Endothelial cell of umbilical vein (primary cell): ENCODE measurements at regions of chr3 and their contacts with region 1.

Region 1: DNA sequence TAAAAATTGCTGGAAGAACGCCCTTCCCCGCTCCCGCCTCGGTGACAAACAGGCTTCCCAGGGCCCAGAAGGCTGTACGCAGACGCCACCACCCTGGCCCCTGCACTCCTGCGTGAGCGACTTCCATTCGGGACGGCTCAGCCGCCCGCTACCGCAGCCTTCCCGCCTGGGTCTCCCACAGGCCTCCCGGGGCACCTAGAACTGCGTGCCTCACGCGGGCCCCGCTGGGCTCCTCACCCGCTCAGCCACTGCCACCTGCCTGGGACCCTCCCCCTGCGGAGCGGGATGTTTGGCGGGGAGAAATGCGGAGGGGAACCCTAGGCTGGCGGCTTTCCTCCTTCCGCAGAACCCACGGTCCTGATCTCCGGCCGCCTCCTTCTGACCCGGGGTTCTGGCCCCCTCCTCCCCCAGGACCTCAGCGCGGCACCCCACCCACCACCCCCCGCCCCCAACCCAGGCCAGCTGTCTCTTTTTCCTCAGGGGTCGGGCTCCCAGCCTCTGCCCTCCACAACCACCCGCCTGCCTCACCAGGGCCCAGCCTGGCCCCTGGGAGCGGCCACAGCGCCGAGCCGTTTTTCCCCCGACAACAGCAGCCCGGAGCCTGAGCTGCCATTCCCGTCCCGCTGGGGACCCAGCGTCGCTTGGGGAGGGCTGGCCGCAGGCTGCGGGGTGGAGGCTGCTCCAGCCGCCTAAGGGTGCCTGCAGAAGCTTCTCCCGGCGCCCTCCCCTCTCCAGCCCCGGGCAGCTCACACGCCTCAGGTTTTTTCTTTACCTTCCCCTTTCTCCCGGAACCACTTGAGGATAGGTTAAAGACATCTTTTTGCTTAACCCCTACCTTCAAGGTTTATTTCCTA is 27.5 kb upstream of the RAB7A start:
- DNase-seq: peak; percentile 23
- H3K4me3 ChIP-seq: peak overlapping the region; percentile 38 to 54 (median 52)
- H3K27ac ChIP-seq: no peak overlapping the region
- H3K4me1 ChIP-seq: no peaks in the 10 kb centered on the region
- H3K27me3 ChIP-seq: peaks cover 0 to 2% of the 10 kb centered on the region in 2 experiments
- CTCF ChIP-seq: no peak
- POLR2A ChIP-seq: no peak

Region 2: GRCh38 chr3:128725932-128726690 is 27.7 kb after region 1 on chr3 and contains the start of gene RAB7A:
- CTCF ChIA-PET with region 1: no interaction called
- POLR2A ChIA-PET with region 1: interaction called, 4 read pairs
- dilution Hi-C with region 1: no loop called
- intact Hi-C with region 1: loop called (anchors 2 kb)
- DNase-seq: peak; percentile 99
- H3K4me3 ChIP-seq: peak within 1 kb of the TSS; percentile 53 to 89 (median 84)
- H3K27ac ChIP-seq: peak within 1 kb of the TSS; percentile 90
- H3K4me1 ChIP-seq: peaks cover 18% of the 10 kb centered on the region
- H3K27me3 ChIP-seq: peaks cover 6 to 7% of the 10 kb centered on the region in 2 experiments
- CTCF ChIP-seq: no peak
- POLR2A ChIP-seq: peak; percentile 90
- total RNA-seq, gene RAB7A: 249 and 262 TPM in 2 replicates

Region 3: DNA sequence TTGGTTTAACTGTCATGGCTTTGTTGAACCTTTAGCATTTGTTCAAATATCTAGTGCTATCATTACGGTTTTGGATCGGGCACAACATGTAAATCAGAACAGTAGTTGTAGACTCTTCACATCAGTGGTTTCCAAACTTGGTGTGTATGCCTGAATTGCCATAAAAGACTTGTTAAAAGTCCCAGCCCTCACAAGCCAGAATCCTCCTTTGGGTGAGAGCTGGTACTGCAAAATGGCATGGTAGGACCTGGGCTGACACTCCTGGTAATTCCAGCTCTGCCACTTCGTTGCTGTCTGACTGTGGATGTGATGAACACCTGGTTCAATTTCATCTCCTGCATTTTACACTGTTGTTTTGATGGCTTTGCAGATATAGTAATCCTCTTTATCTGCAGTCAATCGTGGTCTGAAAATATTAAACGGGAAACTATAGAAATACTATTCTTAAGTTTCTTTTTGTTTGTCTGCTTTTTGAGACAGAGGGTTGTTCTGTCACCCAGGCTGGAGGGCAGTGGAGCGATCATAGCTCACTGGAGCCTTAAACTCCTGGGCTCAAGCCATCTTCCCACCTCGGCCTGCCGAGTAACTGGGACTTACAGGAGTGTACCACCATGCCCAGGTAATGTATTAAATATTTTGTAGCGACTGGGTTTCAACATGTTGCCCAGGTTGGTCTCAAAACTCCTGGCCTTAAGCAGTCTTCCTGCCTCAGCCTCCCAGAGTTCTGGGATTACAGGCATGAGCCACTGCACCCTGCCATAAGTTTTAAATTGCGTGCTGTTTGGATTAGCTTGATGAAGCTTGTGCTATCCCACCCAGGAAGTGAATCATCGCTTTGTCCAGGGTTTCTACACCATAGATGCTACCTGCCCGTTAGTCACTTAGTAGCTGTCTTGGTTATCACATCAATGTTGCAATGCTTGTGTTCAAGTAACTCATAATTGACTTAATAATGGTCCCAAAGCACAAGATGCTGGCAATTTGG is 89.1 kb after region 1 on chr3:
- CTCF ChIA-PET with region 1: no interaction called
- POLR2A ChIA-PET with region 1: no interaction called
- dilution Hi-C with region 1: no loop called
- intact Hi-C with region 1: no loop called
- DNase-seq: no peak
- H3K4me3 ChIP-seq: no peak overlapping the region
- H3K27ac ChIP-seq: no peak overlapping the region
- H3K4me1 ChIP-seq: peaks cover 17% of the 10 kb centered on the region
- H3K27me3 ChIP-seq: no peaks in the 10 kb centered on the region
- CTCF ChIP-seq: peak in 1 of 2 donors; percentile 24
- POLR2A ChIP-seq: no peak

Region 4: GRCh38 chr3:128824132-128824850 is 125.9 kb after region 1 on chr3:
- CTCF ChIA-PET with region 1: no interaction called
- POLR2A ChIA-PET with region 1: no interaction called
- dilution Hi-C with region 1: no loop called
- intact Hi-C with region 1: no loop called
- DNase-seq: no peak
- H3K4me3 ChIP-seq: no peak overlapping the region
- H3K27ac ChIP-seq: no peak overlapping the region
- H3K4me1 ChIP-seq: no peaks in the 10 kb centered on the region
- H3K27me3 ChIP-seq: no peaks in the 10 kb centered on the region
- CTCF ChIP-seq: no peak
- POLR2A ChIP-seq: no peak